B cell (primary cell): ENCODE measurements at regions of chr4 and their contacts with region 1.

Region 1: GRCh38 chr4:2725380-2725779 is 30.8 kb downstream of the TNIP2 start:
- DNase-seq: no peak
- ATAC-seq: no peak
- H3K4me3 ChIP-seq: no peak overlapping the region
- H3K4me3 Mint-ChIP-seq: no peak overlapping the region
- H3K27ac ChIP-seq: no peak overlapping the region
- H3K27ac Mint-ChIP-seq: no peak overlapping the region
- H3K4me1 ChIP-seq: no peaks in the 10 kb centered on the region
- H3K4me1 Mint-ChIP-seq: peaks cover 2% of the 10 kb centered on the region
- H3K27me3 ChIP-seq: no peaks in the 10 kb centered on the region
- H3K27me3 Mint-ChIP-seq: no peaks in the 10 kb centered on the region
- CTCF ChIP-seq: no peak

Region 2: DNA sequence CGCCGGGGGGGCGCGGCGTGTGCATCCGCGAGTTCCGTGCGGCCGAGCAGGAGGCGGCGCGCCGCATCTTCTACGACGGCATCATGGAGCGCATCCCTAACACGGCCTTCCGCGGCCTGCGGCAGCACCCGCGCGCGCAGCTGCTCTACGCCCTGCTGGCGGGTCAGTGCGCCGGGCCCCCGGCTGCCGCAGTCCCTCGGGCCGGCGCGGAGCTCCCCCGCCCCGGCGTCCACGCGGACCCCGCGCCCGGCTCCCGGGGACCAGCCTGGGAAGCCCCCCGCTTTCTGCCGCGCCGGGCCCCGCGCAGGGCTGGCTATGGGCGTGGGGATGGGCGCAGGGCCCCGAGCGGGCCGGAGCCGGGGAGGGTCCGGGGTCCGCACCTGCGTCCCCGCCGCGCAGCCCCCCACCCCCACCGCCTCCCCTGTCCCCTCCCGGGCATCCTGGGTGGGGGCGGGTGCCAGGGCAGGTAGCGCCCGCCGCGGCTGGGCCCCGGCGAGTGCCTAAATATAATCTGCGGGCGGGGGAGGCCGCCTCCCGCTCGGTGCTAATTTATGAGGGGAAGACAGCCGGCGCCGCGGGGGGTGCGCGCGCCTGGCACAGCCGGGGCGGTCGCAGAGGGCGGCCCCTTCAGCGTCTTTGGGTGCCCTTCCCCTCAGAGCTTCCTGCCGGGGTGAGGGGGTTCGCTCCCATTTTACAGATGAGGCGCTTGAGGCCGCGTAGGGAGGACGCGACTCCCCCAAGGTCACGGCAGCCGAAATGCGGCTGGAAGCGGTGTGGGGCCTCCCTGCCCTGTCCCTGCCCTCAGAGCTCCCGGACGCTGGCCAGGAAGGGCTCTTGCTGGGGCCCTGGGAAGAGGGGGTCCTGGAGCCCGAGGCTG is 665.4 kb before region 1 on chr4:
- CTCF ChIA-PET with region 1: no interaction called
- POLR2A ChIA-PET with region 1: no interaction called
- intact Hi-C with region 1: no loop called
- DNase-seq: no peak
- ATAC-seq: peak; percentile 31
- H3K4me3 ChIP-seq: no peak overlapping the region
- H3K4me3 Mint-ChIP-seq: peak overlapping the region; percentile 34
- H3K27ac ChIP-seq: no peak overlapping the region
- H3K27ac Mint-ChIP-seq: no peak overlapping the region
- H3K4me1 ChIP-seq: peaks cover 3 to 4% of the 10 kb centered on the region in 2 donors
- H3K4me1 Mint-ChIP-seq: peaks cover 3% of the 10 kb centered on the region
- H3K27me3 ChIP-seq: peaks cover 0 to 22% (median 7%) of the 10 kb centered on the region in 4 experiments
- H3K27me3 Mint-ChIP-seq: peaks cover 18% of the 10 kb centered on the region
- CTCF ChIP-seq: no peak

Region 3: GRCh38 chr4:2472187-2472586 is 253.2 kb before region 1 on chr4:
- CTCF ChIA-PET with region 1: no interaction called
- POLR2A ChIA-PET with region 1: no interaction called
- intact Hi-C with region 1: no loop called
- DNase-seq: no peak
- ATAC-seq: no peak
- H3K4me3 ChIP-seq: no peak overlapping the region
- H3K4me3 Mint-ChIP-seq: no peak overlapping the region
- H3K27ac ChIP-seq: peak overlapping the region in 1 of 2 donors; percentile 97
- H3K27ac Mint-ChIP-seq: peak overlapping the region; percentile 11
- H3K4me1 ChIP-seq: peaks cover 31 to 38% of the 10 kb centered on the region in 2 donors
- H3K4me1 Mint-ChIP-seq: peaks cover 56% of the 10 kb centered on the region
- H3K27me3 ChIP-seq: no peaks in the 10 kb centered on the region
- H3K27me3 Mint-ChIP-seq: no peaks in the 10 kb centered on the region
- CTCF ChIP-seq: no peak

Region 4: DNA sequence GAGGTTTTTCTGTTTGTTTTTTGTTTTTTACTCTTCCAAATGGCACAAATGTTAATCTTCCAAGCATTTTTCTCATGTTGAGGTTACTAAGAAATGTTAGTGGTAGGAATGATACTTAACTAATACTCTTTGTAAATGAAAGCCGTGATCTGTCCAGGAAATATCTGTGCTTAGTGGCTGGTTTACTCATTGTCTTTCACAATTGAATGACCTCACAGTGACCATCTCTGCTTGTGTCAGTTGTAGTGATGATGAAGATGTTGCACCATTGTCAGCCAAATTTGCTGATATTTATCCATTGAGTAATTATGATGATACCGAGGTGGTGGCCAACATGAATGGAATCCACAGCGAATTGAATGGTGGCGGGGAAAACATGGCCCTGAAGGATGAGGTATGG is 62.8 kb before region 1 on chr4:
- CTCF ChIA-PET with region 1: no interaction called
- POLR2A ChIA-PET with region 1: no interaction called
- intact Hi-C with region 1: no loop called
- DNase-seq: no peak
- ATAC-seq: no peak
- H3K4me3 ChIP-seq: no peak overlapping the region
- H3K4me3 Mint-ChIP-seq: no peak overlapping the region
- H3K27ac ChIP-seq: no peak overlapping the region
- H3K27ac Mint-ChIP-seq: no peak overlapping the region
- H3K4me1 ChIP-seq: peaks cover 6 to 7% of the 10 kb centered on the region in 2 donors
- H3K4me1 Mint-ChIP-seq: peaks cover 15% of the 10 kb centered on the region
- H3K27me3 ChIP-seq: no peaks in the 10 kb centered on the region
- H3K27me3 Mint-ChIP-seq: no peaks in the 10 kb centered on the region
- CTCF ChIP-seq: no peak

Region 5: GRCh38 chr4:3009422-3009821 is 284.0 kb after region 1 on chr4:
- CTCF ChIA-PET with region 1: no interaction called
- POLR2A ChIA-PET with region 1: interaction called, 11 read pairs
- intact Hi-C with region 1: no loop called
- DNase-seq: peak; percentile 40
- ATAC-seq: peak; percentile 41
- H3K4me3 ChIP-seq: no peak overlapping the region
- H3K4me3 Mint-ChIP-seq: no peak overlapping the region
- H3K27ac ChIP-seq: no peak overlapping the region
- H3K27ac Mint-ChIP-seq: no peak overlapping the region
- H3K4me1 ChIP-seq: no peaks in the 10 kb centered on the region
- H3K4me1 Mint-ChIP-seq: no peaks in the 10 kb centered on the region
- H3K27me3 ChIP-seq: no peaks in the 10 kb centered on the region
- H3K27me3 Mint-ChIP-seq: peaks cover 20% of the 10 kb centered on the region
- CTCF ChIP-seq: peak; percentile 25